Endothelial cell of umbilical vein (primary cell): ENCODE measurements at regions of chr17 and their contacts with region 1.

Region 1: GRCh38 chr17:35022536-35023063 is 40.9 kb downstream of the RFFL start:
- DNase-seq: peak; percentile 95
- H3K4me3 ChIP-seq: peak overlapping the region in 1 of 3 experiments; percentile 4
- H3K27ac ChIP-seq: peak overlapping the region; percentile 91
- H3K4me1 ChIP-seq: peaks cover 23% of the 10 kb centered on the region
- H3K27me3 ChIP-seq: no peaks in the 10 kb centered on the region
- CTCF ChIP-seq: peak; percentile 8 to 12
- POLR2A ChIP-seq: peak; percentile 57

Region 2: DNA sequence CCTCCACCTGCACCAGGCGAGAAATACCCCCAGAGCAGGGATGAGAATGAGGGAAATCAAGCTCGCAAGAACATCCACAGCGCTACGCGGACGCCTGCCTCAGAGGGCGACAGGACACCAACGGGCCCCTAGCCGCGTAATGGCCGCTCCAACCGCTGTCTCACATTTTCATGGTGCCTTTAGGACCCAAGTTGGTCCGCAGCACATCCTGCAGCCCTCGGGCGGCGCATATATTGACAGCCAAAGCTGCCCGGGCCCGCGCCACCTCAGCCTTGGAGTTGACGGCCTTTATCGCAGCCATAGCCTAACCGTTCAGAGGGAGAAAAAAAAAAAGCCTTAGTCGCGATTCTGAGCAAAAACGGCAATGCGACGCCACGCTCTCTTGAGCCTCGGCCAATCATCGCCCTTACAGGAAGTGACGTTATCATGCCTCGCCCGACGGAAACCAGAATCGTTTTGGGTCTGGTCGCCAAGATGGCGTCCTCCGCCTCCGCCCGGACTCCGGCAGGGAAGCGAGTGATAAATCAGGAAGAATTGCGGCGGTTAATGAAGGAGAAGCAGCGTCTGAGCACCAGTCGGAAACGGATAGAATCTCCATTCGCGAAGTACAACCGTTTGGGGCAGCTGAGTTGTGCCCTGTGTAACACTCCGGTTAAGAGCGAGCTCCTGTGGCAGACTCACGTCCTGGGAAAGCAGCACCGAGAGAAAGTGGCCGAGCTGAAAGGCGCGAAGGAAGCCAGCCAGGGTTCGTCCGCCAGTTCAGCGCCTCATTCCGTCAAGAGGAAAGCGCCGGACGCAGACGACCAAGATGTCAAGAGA is 61.3 kb before region 1 on chr17 and contains the starts of genes CCT6B and ZNF830:
- CTCF ChIA-PET with region 1: no interaction called
- POLR2A ChIA-PET with region 1: no interaction called
- dilution Hi-C with region 1: no loop called
- intact Hi-C with region 1: loop called (anchors 2 kb)
- DNase-seq: peak; percentile 96
- H3K4me3 ChIP-seq: peak within 1 kb of the TSS; percentile 29 to 84 (median 80)
- H3K27ac ChIP-seq: peak within 1 kb of the TSS; percentile 76
- H3K4me1 ChIP-seq: peaks cover 18% of the 10 kb centered on the region
- H3K27me3 ChIP-seq: peaks cover under 1 to 1% of the 10 kb centered on the region in 2 experiments
- CTCF ChIP-seq: no peak
- POLR2A ChIP-seq: peak; percentile 74
- total RNA-seq, gene CCT6B: 0.78 and 1.6 TPM in 2 replicates
- total RNA-seq, gene ZNF830: 13.9 and 15.0 TPM in 2 replicates

Region 3: GRCh38 chr17:34980681-34981537 is 41.7 kb before region 1 on chr17:
- CTCF ChIA-PET with region 1: interaction called, 3 read pairs
- POLR2A ChIA-PET with region 1: interaction called, 3 read pairs
- dilution Hi-C with region 1: no loop called
- intact Hi-C with region 1: loop called (anchors 1 kb)
- DNase-seq: peak; percentile 80
- H3K4me3 ChIP-seq: peak overlapping the region; percentile 65 to 92 (median 89)
- H3K27ac ChIP-seq: peak overlapping the region; percentile 96
- H3K4me1 ChIP-seq: peaks cover 19% of the 10 kb centered on the region
- H3K27me3 ChIP-seq: no peaks in the 10 kb centered on the region
- CTCF ChIP-seq: peak in 1 of 2 donors; percentile 51
- POLR2A ChIP-seq: peak; percentile 80

Region 4: GRCh38 chr17:34998205-34998604 is 24.4 kb before region 1 on chr17:
- CTCF ChIA-PET with region 1: interaction called, 6 read pairs
- POLR2A ChIA-PET with region 1: interaction called, 3 read pairs
- dilution Hi-C with region 1: no loop called
- intact Hi-C with region 1: loop called (anchors 2 kb)
- DNase-seq: peak; percentile 78
- H3K4me3 ChIP-seq: no peak overlapping the region
- H3K27ac ChIP-seq: no peak overlapping the region
- H3K4me1 ChIP-seq: peaks cover 2% of the 10 kb centered on the region
- H3K27me3 ChIP-seq: no peaks in the 10 kb centered on the region
- CTCF ChIP-seq: peak; percentile 92 to 95
- POLR2A ChIP-seq: no peak

Region 5: GRCh38 chr17:35063514-35064223 is 41.1 kb after region 1 on chr17 and contains the start of gene RFFL:
- CTCF ChIA-PET with region 1: interaction called, 24 read pairs
- POLR2A ChIA-PET with region 1: interaction called, 6 read pairs
- dilution Hi-C with region 1: no loop called
- intact Hi-C with region 1: loop called (anchors 1 kb)
- DNase-seq: peak; percentile 95
- H3K4me3 ChIP-seq: no peak within 1 kb of the TSS
- H3K27ac ChIP-seq: peak within 1 kb of the TSS; percentile 81
- H3K4me1 ChIP-seq: peaks cover 7% of the 10 kb centered on the region
- H3K27me3 ChIP-seq: no peaks in the 10 kb centered on the region
- CTCF ChIP-seq: peak in 1 of 2 donors; percentile 11
- POLR2A ChIP-seq: peak; percentile 28
- total RNA-seq, gene RFFL: 14.1 and 14.2 TPM in 2 replicates

Region 6: DNA sequence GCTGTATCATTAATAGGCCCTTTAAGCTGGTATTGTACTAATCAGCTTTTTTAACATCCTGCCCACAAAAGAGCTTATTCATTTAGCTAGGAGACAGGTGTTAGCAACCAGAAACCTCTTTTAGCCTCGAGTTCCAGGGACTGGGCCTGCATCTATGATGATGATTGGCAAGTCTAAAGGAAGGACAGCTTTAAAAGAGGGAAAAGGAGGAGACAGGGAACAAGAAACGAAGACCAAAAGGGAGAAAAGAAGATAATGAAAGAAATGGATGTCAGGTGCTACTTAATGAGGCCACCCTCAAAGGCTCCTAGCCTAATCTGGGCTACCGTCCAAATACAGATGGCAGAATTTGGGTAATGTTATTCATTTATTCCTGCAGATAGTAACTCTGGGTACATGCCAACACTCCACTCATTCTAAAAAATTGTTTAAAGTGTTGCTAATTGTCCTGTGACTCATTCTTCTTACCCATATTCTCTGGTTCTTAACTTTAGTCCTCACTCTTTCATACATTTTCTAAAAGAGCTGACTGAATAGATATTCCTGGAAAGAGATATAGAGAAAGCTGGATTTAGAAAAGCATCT is 59.6 kb after region 1 on chr17:
- CTCF ChIA-PET with region 1: interaction called, 10 read pairs
- POLR2A ChIA-PET with region 1: interaction called, 3 read pairs
- dilution Hi-C with region 1: no loop called
- intact Hi-C with region 1: no loop called
- DNase-seq: peak; percentile 71
- H3K4me3 ChIP-seq: no peak overlapping the region
- H3K27ac ChIP-seq: peak overlapping the region; percentile 31
- H3K4me1 ChIP-seq: peaks cover 22% of the 10 kb centered on the region
- H3K27me3 ChIP-seq: no peaks in the 10 kb centered on the region
- CTCF ChIP-seq: no peak
- POLR2A ChIP-seq: no peak

Region 7: DNA sequence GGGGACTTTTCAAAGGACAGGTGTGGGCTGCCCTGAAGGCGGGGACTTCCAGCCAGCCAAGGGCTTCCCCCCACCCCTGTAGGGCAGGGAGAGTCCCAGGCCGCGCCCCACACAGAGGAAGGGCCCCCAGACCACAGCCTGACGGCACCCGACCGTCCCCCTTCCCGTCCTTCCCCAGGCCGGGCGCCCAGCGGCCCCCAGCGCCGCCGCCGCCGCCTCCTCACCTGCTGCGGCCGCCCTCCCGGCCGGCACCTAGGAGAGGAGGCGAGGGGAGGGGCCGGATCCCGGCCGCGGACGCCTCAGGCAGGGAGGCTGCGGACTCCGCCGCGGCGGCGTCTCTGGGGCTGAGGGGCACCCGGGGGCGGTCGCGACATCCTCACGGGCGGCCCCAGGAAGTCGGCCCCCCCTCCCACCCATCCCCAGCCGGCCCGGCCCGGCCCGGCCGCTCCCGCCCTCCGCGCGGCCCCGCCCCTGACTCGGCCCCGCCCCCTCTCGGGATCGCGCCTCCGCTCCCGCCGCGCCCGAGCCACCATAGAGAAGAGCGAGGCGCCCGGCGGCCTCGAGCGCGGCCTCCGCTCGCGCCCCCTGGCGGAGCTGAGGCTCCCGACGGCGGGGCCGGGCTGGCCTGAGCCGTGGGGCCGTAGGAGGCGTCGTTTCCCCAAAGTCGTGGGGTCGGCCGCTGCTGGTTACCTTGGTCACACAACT is 66.4 kb after region 1 on chr17:
- CTCF ChIA-PET with region 1: interaction called, 34 read pairs
- POLR2A ChIA-PET with region 1: interaction called, 3 read pairs
- dilution Hi-C with region 1: no loop called
- intact Hi-C with region 1: loop called (anchors 1 kb)
- DNase-seq: peak; percentile 73
- H3K4me3 ChIP-seq: peak overlapping the region; percentile 65 to 81 (median 71)
- H3K27ac ChIP-seq: peak overlapping the region; percentile 72
- H3K4me1 ChIP-seq: peaks cover 22% of the 10 kb centered on the region
- H3K27me3 ChIP-seq: no peaks in the 10 kb centered on the region
- CTCF ChIP-seq: peak; percentile 76 to 77
- POLR2A ChIP-seq: peak; percentile 45